ENCODE measurements at regions of chr9 and their contacts with region 1.

Region 1: GRCh38 chr9:73023025-73023541 is 70.2 kb upstream of the ALDH1A1 start:
- DNase-seq: peak; percentile 75
- H3K4me3 ChIP-seq: no peak overlapping the region
- H3K27ac ChIP-seq: peak overlapping the region in 3 of 4 donors; percentile 42 to 61 (median 45)
- H3K4me1 ChIP-seq: peaks cover 0 to 18% (median 12%) of the 10 kb centered on the region in 4 donors
- H3K27me3 ChIP-seq: no peaks in the 10 kb centered on the region
- CTCF ChIP-seq: peak; percentile 81 to 85 (median 84)
- EP300 ChIP-seq: no peak
- POLR2A ChIP-seq: no peak

Region 2: DNA sequence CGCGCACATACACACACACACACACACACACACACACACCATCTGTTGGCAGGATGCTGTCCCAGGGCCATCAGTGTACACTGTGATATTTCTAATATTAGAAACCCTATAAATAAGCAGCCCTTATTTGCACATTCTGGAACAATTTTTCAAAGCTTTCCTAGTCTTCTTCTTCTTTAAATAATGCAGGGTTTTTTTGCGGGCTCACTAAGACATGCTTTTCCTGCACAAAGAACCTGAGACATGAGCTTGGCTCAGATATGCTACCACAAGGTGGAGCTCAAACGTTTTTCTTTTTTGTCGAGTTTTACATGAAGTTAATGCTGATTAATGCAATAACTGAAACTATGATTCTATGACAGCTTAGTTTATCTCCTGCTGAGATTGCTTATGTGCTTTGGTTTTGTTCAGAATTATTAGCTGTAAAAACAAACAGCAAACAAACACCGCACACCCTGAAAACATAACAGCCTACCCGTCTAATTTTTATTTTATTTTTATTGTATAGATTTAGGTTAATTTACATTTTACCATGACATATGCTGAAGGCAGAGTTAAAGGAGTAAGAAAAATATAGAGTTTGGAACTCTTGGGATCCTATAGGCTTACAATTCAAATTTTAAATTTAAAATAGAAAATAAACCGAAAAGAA is 166.0 kb before region 1 on chr9:
- intact Hi-C with region 1: loop called (anchors 1 kb)
- DNase-seq: no peak
- H3K4me3 ChIP-seq: no peak overlapping the region
- H3K27ac ChIP-seq: peak overlapping the region in 2 of 4 donors; percentile 19 to 28
- H3K4me1 ChIP-seq: peaks cover 0 to 36% (median 19%) of the 10 kb centered on the region in 4 donors
- H3K27me3 ChIP-seq: no peaks in the 10 kb centered on the region
- CTCF ChIP-seq: peak; percentile 65 to 74 (median 66)
- EP300 ChIP-seq: no peak
- POLR2A ChIP-seq: no peak

Region 3: DNA sequence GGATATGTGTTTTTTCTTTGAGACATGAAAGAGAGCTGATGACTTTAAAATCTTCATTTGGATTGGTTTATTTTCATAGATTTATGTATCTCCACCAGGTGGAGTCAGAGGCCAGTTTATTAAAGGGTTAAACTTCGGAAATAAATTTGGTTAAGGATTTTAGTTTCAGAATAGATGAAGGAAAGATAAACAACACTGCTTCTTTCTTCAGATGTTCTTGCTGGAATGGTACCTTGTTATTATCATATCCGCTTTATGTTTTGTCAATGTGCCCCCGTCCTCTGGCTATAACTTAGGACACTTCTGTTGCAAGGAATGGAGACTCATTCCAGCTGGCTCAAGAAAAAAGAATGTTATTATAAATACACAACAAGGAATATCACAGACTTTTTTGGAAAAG is 151.4 kb before region 1 on chr9:
- intact Hi-C with region 1: loop called (anchors 5 kb)
- DNase-seq: no peak
- H3K4me3 ChIP-seq: no peak overlapping the region
- H3K27ac ChIP-seq: peak overlapping the region in 3 of 4 donors; percentile 7 to 72 (median 57)
- H3K4me1 ChIP-seq: peaks cover 0 to 46% (median 33%) of the 10 kb centered on the region in 4 donors
- H3K27me3 ChIP-seq: no peaks in the 10 kb centered on the region
- CTCF ChIP-seq: peak; percentile 31 to 44 (median 42)
- EP300 ChIP-seq: no peak
- POLR2A ChIP-seq: no peak

Region 4: GRCh38 chr9:72882117-72882775 is 140.8 kb before region 1 on chr9:
- intact Hi-C with region 1: no loop called
- DNase-seq: peak; percentile 79
- H3K4me3 ChIP-seq: no peak overlapping the region
- H3K27ac ChIP-seq: peak overlapping the region in 3 of 4 donors; percentile 32 to 61 (median 55)
- H3K4me1 ChIP-seq: peaks cover 0 to 20% (median 17%) of the 10 kb centered on the region in 4 donors
- H3K27me3 ChIP-seq: no peaks in the 10 kb centered on the region
- CTCF ChIP-seq: no peak
- EP300 ChIP-seq: no peak
- POLR2A ChIP-seq: no peak

Region 5: GRCh38 chr9:72952914-72953313 is 70.2 kb before region 1 on chr9 and contains the start of gene ALDH1A1:
- intact Hi-C with region 1: loop called (anchors 5 kb)
- DNase-seq: no peak
- H3K4me3 ChIP-seq: peak within 1 kb of the TSS; percentile 44 to 58 (median 49)
- H3K27ac ChIP-seq: peak within 1 kb of the TSS; percentile 64 to 88 (median 80)
- H3K4me1 ChIP-seq: peaks cover 0 to 30% (median 16%) of the 10 kb centered on the region in 4 donors
- H3K27me3 ChIP-seq: no peaks in the 10 kb centered on the region
- CTCF ChIP-seq: no peak
- EP300 ChIP-seq: no peak
- POLR2A ChIP-seq: peak; percentile 55 to 74
- total RNA-seq, gene ALDH1A1: 241 to 353 (median 300) TPM

Region 6: GRCh38 chr9:73050065-73050816 is 27.2 kb after region 1 on chr9:
- intact Hi-C with region 1: no loop called
- DNase-seq: no peak
- H3K4me3 ChIP-seq: no peak overlapping the region
- H3K27ac ChIP-seq: peak overlapping the region in 3 of 4 donors; percentile 51 to 67 (median 60)
- H3K4me1 ChIP-seq: peaks cover 0 to 24% (median 20%) of the 10 kb centered on the region in 4 donors
- H3K27me3 ChIP-seq: no peaks in the 10 kb centered on the region
- CTCF ChIP-seq: peak in 1 of 4 experiments; percentile 43
- EP300 ChIP-seq: no peak
- POLR2A ChIP-seq: no peak

Measured in sigmoid colon (tissue), 7 donors.